Mammary epithelial cell (primary cell): ENCODE measurements at regions of chr2 and their contacts with region 1.

Region 1: GRCh38 chr2:15177103-15177502 is 384.0 kb downstream of the NBAS start:
- DNase-seq: peak; percentile 85
- H3K4me3 ChIP-seq: no peak overlapping the region
- H3K27ac ChIP-seq: no peak overlapping the region
- H3K4me1 ChIP-seq: peaks cover 8% of the 10 kb centered on the region
- H3K27me3 ChIP-seq: no peaks in the 10 kb centered on the region
- CTCF ChIP-seq: no peak

Region 2: GRCh38 chr2:14256890-14257289 is 920.2 kb before region 1 on chr2:
- CTCF ChIA-PET with region 1: no interaction called
- dilution Hi-C with region 1: no loop called
- in situ Hi-C with region 1: no loop called
- intact Hi-C with region 1: no loop called
- DNase-seq: peak; percentile 59
- H3K4me3 ChIP-seq: no peak overlapping the region
- H3K27ac ChIP-seq: peak overlapping the region; percentile 38
- H3K4me1 ChIP-seq: peaks cover 16% of the 10 kb centered on the region
- H3K27me3 ChIP-seq: no peaks in the 10 kb centered on the region
- CTCF ChIP-seq: no peak

Region 3: DNA sequence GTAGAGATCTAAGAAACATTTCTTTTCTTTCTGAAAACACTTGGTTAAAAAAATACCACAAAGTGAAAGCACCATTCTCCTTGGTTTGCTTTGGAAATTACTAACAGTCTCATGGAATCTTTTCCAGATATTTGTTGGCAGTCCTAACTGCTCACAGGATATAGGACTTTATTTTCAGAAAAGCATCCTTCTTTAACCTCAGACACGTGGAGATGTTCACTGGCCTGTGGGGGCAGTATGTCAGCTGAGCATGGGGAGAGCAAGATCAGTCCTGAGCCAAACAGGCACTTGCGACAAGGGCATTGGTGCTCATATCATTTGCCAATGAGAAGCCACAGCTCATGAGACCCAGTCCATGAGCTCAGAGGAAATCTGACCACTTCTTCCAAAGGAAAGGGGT is 12.1 kb after region 1 on chr2:
- CTCF ChIA-PET with region 1: no interaction called
- dilution Hi-C with region 1: no loop called
- in situ Hi-C with region 1: no loop called
- intact Hi-C with region 1: no loop called
- DNase-seq: no peak
- H3K4me3 ChIP-seq: no peak overlapping the region
- H3K27ac ChIP-seq: no peak overlapping the region
- H3K4me1 ChIP-seq: no peaks in the 10 kb centered on the region
- H3K27me3 ChIP-seq: no peaks in the 10 kb centered on the region
- CTCF ChIP-seq: no peak

Region 4: GRCh38 chr2:15334650-15335326 is 157.7 kb after region 1 on chr2:
- CTCF ChIA-PET with region 1: no interaction called
- dilution Hi-C with region 1: no loop called
- in situ Hi-C with region 1: no loop called
- intact Hi-C with region 1: loop called (anchors 10 kb)
- DNase-seq: peak; percentile 68
- H3K4me3 ChIP-seq: no peak overlapping the region
- H3K27ac ChIP-seq: no peak overlapping the region
- H3K4me1 ChIP-seq: peaks cover 18% of the 10 kb centered on the region
- H3K27me3 ChIP-seq: no peaks in the 10 kb centered on the region
- CTCF ChIP-seq: no peak

Region 5: GRCh38 chr2:15577071-15577735 is 400.1 kb after region 1 on chr2:
- CTCF ChIA-PET with region 1: no interaction called
- dilution Hi-C with region 1: no loop called
- in situ Hi-C with region 1: loop called in 1 of 2 experiments (anchors 25 kb)
- intact Hi-C with region 1: no loop called
- DNase-seq: peak; percentile 66
- H3K4me3 ChIP-seq: no peak overlapping the region
- H3K27ac ChIP-seq: no peak overlapping the region
- H3K4me1 ChIP-seq: peaks cover 5% of the 10 kb centered on the region
- H3K27me3 ChIP-seq: no peaks in the 10 kb centered on the region
- CTCF ChIP-seq: peak; percentile 91 to 94